Posterior cingulate gyrus (tissue), 11 donors: ENCODE measurements at regions of chr16 and their contacts with region 1.

Region 1: DNA sequence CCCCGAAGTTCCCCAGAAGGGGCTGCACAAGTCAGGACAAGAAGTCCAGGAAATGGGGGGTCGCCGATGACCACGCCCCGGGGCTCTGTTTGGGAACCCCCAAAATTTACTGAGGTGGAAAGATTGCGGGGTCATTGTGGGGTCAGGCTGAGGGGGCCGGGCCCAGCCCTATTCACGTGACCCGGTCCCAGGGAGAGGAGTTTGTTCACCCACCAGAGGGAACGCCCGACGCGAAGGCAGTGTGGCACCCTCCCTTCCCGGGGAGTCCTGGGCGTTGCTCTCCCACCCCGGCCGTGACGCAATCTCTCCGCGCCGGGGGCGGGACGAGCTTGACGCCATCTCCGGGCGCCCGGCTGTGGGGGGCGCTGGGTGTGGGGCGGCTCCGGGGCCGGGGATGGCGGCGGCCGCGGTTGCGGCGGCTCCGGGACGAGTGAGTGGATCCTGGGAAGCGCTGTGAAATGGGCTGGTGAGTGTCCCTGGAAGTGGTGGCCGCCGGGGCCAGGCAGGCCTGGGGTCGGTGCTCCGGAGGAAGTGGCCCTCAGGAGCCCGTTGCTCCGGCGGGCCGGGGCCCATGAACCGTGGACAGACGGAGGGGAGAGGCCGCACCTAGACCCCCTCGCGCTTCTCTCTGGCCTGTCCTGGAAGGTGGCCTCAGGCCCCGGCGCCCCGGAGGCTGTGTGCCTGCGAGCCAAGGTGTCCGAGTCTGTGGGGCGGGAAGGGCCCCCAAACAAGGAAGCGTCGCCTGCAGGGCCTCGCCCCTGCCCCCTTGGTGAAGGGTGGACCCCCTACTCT is at the start of gene ATXN1L:
- DNase-seq: peak; percentile 83 to 99 (median 88)

Region 2: GRCh38 chr16:71781741-71782140 is 64.1 kb before region 1 on chr16:
- intact Hi-C with region 1: no loop called
- DNase-seq: no peak

Region 3: DNA sequence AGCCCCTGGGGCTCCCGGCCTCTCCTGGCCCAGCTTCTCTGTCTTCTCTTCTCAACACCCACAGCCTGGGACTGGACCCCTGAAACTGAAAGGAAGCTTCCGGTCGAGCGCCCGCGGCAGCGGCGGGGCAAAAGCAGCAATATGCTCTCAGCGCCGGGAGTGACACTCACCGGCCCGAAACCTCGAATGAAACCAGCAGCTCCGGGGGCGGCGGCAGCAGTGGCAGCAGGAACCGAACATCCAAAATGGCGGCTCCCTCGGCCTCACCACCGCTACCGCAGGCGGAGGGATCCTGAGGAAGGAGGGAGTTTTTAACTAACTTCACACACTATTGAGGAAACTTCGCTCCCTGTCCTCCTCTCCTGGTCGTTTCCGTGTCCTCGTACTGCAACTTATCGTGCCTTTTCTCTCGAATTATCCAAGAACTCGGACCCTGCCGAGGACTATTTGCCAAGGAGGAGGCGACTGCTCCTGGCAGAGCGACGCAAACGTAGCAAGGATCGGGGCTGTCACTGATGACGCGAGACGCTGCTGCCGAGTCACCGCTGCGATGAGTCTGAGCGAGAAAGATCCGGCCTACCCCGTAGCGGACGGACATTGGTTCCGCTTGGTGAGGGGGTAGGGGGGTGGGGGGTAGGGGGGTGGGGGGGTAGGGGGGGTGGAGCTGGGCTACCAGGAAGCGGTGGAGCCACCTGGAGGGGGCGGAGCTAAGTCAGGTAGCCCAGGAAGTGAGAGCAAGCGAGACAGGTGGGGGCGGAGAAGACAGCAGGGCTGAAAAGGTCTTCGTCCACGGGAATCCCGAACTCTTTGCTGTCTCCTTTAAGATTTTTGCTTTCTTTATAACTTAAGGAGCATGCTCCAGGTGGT is 37.0 kb before region 1 on chr16 and contains the start of gene AP1G1:
- intact Hi-C with region 1: loop called (anchors 2 kb)
- DNase-seq: peak; percentile 90 to 99 (median 94)